Pancreas (tissue), 10 donors: ENCODE measurements at regions of chr22 and their contacts with region 1.

Region 1: GRCh38 chr22:24189249-24190158 is 8.2 kb downstream of the SUSD2 start:
- DNase-seq: peak; percentile 57 to 89 (median 80)
- ATAC-seq: peak; percentile 90 to 98 (median 96)
- H3K4me3 ChIP-seq: no peak overlapping the region
- H3K27ac ChIP-seq: no peak overlapping the region
- H3K4me1 ChIP-seq: no peaks in the 10 kb centered on the region
- H3K27me3 ChIP-seq: no peaks in the 10 kb centered on the region
- CTCF ChIP-seq: peak; percentile 52 to 86 (median 80)

Region 2: DNA sequence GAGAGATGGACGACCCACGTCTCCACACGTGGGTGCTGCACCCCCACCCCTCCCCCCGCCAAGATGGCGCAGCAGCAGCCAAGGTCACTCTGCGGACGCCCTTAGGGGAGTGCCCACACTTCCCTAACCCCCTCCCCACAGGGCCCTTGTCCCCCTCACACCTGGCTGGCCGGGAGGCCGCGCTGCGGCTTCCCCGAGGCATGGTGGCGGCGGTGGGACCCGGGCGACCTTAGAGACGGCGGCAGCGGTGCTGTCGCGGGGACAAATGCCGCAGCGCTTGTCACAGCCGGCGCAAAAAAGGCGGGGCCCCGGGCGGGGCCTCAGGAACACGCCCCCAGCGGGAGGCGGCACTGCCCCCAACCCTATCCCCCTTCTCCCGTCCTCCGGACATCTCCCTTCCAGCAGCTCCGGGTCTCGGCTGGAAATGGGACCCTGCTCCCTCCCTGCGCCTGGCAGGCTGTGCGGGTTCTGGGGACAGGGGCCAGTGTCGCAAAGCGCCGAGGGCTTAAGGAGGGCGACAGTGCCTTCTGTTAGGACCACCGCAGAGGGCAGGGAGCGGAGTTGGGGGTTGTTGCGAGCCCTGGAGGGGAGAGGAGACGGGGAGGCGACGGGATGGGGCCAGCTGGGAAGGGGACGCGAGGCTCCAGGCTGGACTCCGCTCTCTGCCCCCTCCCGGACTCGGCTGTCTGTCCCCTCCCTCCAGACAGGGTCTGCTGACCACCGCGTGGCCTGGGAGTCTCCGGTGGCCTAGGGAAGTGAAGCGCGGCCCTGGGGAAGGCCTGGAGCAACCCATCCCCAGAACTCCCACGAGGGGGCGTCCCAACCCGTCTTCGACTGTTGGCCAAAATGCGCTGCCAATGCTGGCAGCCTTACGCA is 421.6 kb before region 1 on chr22 and contains the start of gene CHCHD10:
- intact Hi-C with region 1: no loop called
- DNase-seq: peak; percentile 81 to 93 (median 86)
- ATAC-seq: peak; percentile 82 to 93 (median 87)
- H3K4me3 ChIP-seq: peak within 1 kb of the TSS; percentile 58 to 90 (median 77)
- H3K27ac ChIP-seq: peak within 1 kb of the TSS; percentile 54 to 73 (median 70)
- H3K4me1 ChIP-seq: peaks cover 0 to 9% (median 0%) of the 10 kb centered on the region in 3 donors
- H3K27me3 ChIP-seq: no peaks in the 10 kb centered on the region
- CTCF ChIP-seq: peak; percentile 54 to 77 (median 70)
- total RNA-seq, gene CHCHD10: 30.6 to 75.5 (median 50.6) TPM

Region 3: DNA sequence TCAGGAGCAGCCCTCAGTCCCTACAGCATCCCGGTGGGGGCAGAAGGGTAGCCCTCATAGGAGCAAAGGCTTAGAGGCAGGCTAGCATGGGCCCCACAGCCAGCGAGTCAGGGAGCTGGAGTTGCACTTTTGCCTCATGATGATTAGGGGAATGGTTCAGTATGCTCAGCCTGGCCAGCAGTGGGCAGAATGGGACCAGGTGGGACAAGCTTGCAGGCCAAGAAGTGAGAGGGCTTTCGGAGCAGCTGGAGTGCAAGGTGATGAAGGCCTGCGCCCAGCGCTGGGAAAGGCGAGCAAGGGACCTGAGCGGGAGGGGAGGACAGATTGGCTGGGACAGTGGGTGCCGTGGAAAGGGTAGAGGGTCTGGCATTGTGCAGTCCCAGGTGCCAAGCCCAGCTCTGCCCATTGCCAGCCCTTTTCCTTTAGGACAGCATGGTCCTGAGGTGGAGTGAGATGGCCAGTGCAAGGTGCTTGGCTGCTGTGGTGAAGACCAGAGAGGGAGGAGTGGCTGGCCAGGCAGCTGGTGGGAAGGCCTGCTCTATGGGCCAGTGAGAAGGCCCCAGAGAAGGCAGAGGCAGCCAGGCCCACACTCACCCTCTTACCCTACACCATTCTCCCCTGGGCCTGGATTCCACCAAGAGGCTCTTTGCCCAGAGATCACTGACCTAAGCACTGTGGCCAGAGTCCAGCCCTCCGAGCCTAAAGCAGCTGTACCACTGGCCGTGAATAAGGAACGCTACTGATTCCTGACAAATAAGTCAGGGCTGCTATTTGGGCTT is 56.1 kb before region 1 on chr22:
- intact Hi-C with region 1: no loop called
- DNase-seq: peak in 1 of 6 donors; percentile 46
- ATAC-seq: peak in 2 of 4 donors; percentile 13 to 36
- H3K4me3 ChIP-seq: no peak overlapping the region
- H3K27ac ChIP-seq: no peak overlapping the region
- H3K4me1 ChIP-seq: no peaks in the 10 kb centered on the region
- H3K27me3 ChIP-seq: no peaks in the 10 kb centered on the region
- CTCF ChIP-seq: no peak

Region 4: GRCh38 chr22:24230911-24231656 is 41.6 kb after region 1 on chr22:
- intact Hi-C with region 1: loop called in 1 of 3 experiments (anchors 5 kb)
- DNase-seq: peak; percentile 36 to 88 (median 75)
- ATAC-seq: peak; percentile 78 to 87 (median 80)
- H3K4me3 ChIP-seq: no peak overlapping the region
- H3K27ac ChIP-seq: no peak overlapping the region
- H3K4me1 ChIP-seq: no peaks in the 10 kb centered on the region
- H3K27me3 ChIP-seq: no peaks in the 10 kb centered on the region
- CTCF ChIP-seq: peak in 3 of 4 donors; percentile 37 to 47 (median 38)

Region 5: DNA sequence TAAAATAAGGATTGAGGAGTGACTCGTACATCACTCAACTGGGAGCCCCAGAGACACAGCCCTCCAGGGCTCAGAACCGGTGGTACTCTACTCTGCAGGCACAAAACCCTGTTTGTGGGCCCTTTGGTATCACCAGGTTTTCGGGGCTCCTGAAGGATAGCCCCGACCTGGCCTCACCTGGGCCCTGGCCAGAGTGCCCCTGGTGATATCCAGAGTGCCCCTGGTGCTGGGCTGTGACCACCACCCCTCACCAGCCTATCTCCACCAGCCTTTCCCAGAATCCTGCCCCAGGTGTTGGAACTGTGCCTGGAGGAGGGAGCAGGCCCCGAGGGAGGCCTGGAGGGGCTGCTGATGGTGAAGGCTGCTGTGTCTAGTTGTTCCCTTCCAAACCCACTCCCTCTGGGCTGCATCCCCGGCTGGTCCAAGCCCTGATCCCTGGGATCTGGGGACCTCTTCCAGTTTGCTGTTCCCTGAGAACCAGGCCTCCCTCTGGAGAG is 57.6 kb after region 1 on chr22:
- intact Hi-C with region 1: loop called in 1 of 3 experiments (anchors 5 kb)
- DNase-seq: peak in 1 of 6 donors; percentile 42
- ATAC-seq: peak in 2 of 4 donors; percentile 7 to 10
- H3K4me3 ChIP-seq: no peak overlapping the region
- H3K27ac ChIP-seq: peak overlapping the region in 1 of 4 donors; percentile 35
- H3K4me1 ChIP-seq: peaks cover 0 to 4% (median 0%) of the 10 kb centered on the region in 3 donors
- H3K27me3 ChIP-seq: no peaks in the 10 kb centered on the region
- CTCF ChIP-seq: no peak

Region 6: DNA sequence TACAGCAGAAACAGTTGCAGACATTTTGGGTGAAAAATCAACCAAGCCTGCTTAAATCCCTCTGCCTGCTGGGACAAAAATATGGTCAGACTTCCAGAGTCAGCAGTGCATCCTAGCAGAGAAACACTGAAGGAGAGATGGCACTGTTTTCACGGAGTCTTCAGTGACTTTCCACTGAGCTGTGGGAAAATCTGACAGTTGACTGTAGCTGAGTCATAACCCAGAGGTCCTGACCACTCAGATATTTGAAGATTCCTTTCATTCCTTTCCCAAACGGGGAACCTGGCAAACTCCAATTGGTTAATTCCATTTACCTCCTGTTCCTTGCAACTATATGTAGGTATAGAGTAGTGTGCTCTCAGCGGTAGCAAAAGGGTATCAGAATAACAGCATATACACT is 284.7 kb after region 1 on chr22:
- intact Hi-C with region 1: no loop called
- DNase-seq: no peak
- ATAC-seq: peak in 2 of 4 donors; percentile 45 to 47
- H3K4me3 ChIP-seq: no peak overlapping the region
- H3K27ac ChIP-seq: no peak overlapping the region
- H3K4me1 ChIP-seq: no peaks in the 10 kb centered on the region
- H3K27me3 ChIP-seq: no peaks in the 10 kb centered on the region
- CTCF ChIP-seq: no peak